IMR-90 (cell line): ENCODE measurements at regions of chr4 and their contacts with region 1.

Region 1: GRCh38 chr4:20839957-20840356 is 139.7 kb downstream of the PACRGL start:
- DNase-seq: peak; percentile 53
- ATAC-seq: peak; percentile 42; the same call in 1 of the 2 replicates
- H3K4me3 ChIP-seq: no peak overlapping the region
- H3K27ac ChIP-seq: no peak overlapping the region
- H3K4me1 ChIP-seq: no peaks in the 10 kb centered on the region
- H3K27me3 ChIP-seq: no peaks in the 10 kb centered on the region
- CTCF ChIP-seq: no peak
- POLR2A ChIP-seq: no peak
- RAD21 ChIP-seq: no peak

Region 2: GRCh38 chr4:20017070-20017776 is 822.7 kb before region 1 on chr4:
- CTCF ChIA-PET with region 1: no interaction called
- POLR2A ChIA-PET with region 1: no interaction called
- dilution Hi-C with region 1: no loop called
- in situ Hi-C with region 1: no loop called
- intact Hi-C with region 1: no loop called
- DNase-seq: peak; percentile 85
- ATAC-seq: peak; percentile 81
- H3K4me3 ChIP-seq: no peak overlapping the region
- H3K27ac ChIP-seq: no peak overlapping the region
- H3K4me1 ChIP-seq: peaks cover 3% of the 10 kb centered on the region
- H3K27me3 ChIP-seq: no peaks in the 10 kb centered on the region
- CTCF ChIP-seq: no peak
- POLR2A ChIP-seq: no peak
- RAD21 ChIP-seq: no peak

Region 3: DNA sequence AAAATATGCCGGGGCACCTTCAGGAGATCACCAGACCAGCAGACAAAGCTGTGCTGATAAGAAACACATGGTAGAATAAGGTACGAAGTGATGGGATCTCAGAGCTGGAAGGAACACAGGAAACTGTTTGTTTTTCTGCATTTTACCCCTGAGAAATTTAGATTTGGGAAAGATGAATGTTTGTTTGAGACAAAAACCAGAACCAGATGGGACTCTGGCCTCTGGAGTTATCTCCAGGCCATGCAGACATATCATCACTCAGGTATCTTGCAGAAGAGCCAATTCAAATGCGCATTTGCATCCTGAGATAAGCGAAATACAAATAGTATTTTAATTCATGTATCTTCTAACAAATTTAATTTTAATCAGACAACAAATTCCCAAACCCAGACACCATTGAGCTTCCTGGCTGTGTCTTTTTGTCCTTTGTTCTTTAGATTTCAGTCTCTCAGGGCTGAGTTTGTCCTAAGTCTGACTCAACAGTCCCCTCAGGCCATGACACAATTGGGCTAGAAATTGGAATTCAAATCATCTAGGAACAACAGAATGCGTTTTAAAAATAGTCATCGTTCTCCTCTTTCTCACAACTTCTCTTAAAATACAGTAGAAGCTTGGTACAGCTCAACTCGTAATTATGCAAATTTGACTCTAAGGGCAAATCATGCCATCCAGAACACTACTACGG is 19.3 kb after region 1 on chr4:
- CTCF ChIA-PET with region 1: no interaction called
- POLR2A ChIA-PET with region 1: interaction called, 19 read pairs
- dilution Hi-C with region 1: no loop called
- in situ Hi-C with region 1: no loop called
- intact Hi-C with region 1: no loop called
- DNase-seq: no peak
- ATAC-seq: no peak
- H3K4me3 ChIP-seq: no peak overlapping the region
- H3K27ac ChIP-seq: no peak overlapping the region
- H3K4me1 ChIP-seq: no peaks in the 10 kb centered on the region
- H3K27me3 ChIP-seq: no peaks in the 10 kb centered on the region
- CTCF ChIP-seq: no peak
- POLR2A ChIP-seq: no peak
- RAD21 ChIP-seq: no peak